HCT116 (cell line): ENCODE measurements at regions of chr19 and their contacts with region 1.

Region 1: GRCh38 chr19:49546825-49547565 is 19.2 kb downstream of the RCN3 start:
- DNase-seq: peak; percentile 85
- ATAC-seq: peak; percentile 89
- H3K4me3 ChIP-seq: peak overlapping the region; percentile 29 to 45
- H3K27ac ChIP-seq: peak overlapping the region; percentile 53; the same call in 1 of the 2 replicates
- H3K4me1 ChIP-seq: peaks cover 3 to 14% of the 10 kb centered on the region in 2 experiments; a peak in 3 of 4 replicates
- H3K27me3 ChIP-seq: no peaks in the 10 kb centered on the region
- CTCF ChIP-seq: peak; percentile 70 to 94 (median 88)
- POLR2A ChIP-seq: no peak
- RAD21 ChIP-seq: peak; percentile 92

Region 2: DNA sequence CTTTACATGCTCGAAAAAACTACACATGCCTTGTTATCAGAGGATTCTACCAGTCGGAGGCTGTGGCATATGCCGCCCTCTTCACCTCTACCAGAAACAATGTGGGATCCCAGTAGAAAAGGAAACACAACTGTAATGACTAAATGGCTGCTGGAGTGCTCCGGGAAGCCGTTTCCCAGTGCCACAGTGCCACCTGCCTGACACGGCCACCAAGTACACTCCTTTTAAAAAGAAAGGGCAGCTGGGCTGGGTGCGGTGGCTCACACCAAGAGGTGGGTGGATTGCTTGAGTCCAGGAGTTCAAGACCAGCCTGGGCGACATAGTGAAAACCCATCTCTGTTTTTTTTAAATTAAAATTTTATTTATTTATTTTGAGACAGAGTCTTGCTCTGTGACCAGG is 322.1 kb before region 1 on chr19:
- CTCF ChIA-PET with region 1: interaction called, 8 read pairs
- POLR2A ChIA-PET with region 1: no interaction called
- RAD21 ChIA-PET with region 1: no interaction called
- intact Hi-C with region 1: loop called (anchors 5 kb)
- DNase-seq: peak; percentile 61
- ATAC-seq: peak; percentile 87
- H3K4me3 ChIP-seq: no peak overlapping the region
- H3K27ac ChIP-seq: no peak overlapping the region
- H3K4me1 ChIP-seq: peaks cover 7 to 20% of the 10 kb centered on the region in 2 experiments; a peak in 3 of 4 replicates
- H3K27me3 ChIP-seq: no peaks in the 10 kb centered on the region
- CTCF ChIP-seq: peak; percentile 61 to 82 (median 67)
- POLR2A ChIP-seq: no peak
- RAD21 ChIP-seq: peak; percentile 93

Region 3: GRCh38 chr19:49473868-49474544 is 73.0 kb before region 1 on chr19 and contains the start of gene FLT3LG:
- CTCF ChIA-PET with region 1: interaction called, 12 read pairs
- POLR2A ChIA-PET with region 1: no interaction called
- RAD21 ChIA-PET with region 1: interaction called in 1 of 2 experiments, 3 read pairs
- intact Hi-C with region 1: no loop called
- DNase-seq: no peak
- ATAC-seq: peak; percentile 41
- H3K4me3 ChIP-seq: peak within 1 kb of the TSS; percentile 54 to 71
- H3K27ac ChIP-seq: 0 out of 2 replicates have a peak within 1 kb of the TSS, but pooled peaks have one; percentile 19
- H3K4me1 ChIP-seq: peaks cover 33 to 57% of the 10 kb centered on the region in 2 experiments
- H3K27me3 ChIP-seq: no peaks in the 10 kb centered on the region
- CTCF ChIP-seq: peak; percentile 95 to 98 (median 95)
- POLR2A ChIP-seq: peak; percentile 23
- RAD21 ChIP-seq: peak; percentile 63
- total RNA-seq, gene FLT3LG: 3.8 TPM

Region 4: GRCh38 chr19:49534632-49535385 is 12.2 kb before region 1 on chr19:
- CTCF ChIA-PET with region 1: interaction called, 11 read pairs
- POLR2A ChIA-PET with region 1: no interaction called
- RAD21 ChIA-PET with region 1: no interaction called
- intact Hi-C with region 1: no loop called
- DNase-seq: no peak
- ATAC-seq: no peak
- H3K4me3 ChIP-seq: no peak overlapping the region
- H3K27ac ChIP-seq: no peak overlapping the region
- H3K4me1 ChIP-seq: peaks cover 0 to 10% of the 10 kb centered on the region in 2 experiments; a peak in 1 of 4 replicates
- H3K27me3 ChIP-seq: no peaks in the 10 kb centered on the region
- CTCF ChIP-seq: no peak
- POLR2A ChIP-seq: no peak
- RAD21 ChIP-seq: no peak

Region 5: DNA sequence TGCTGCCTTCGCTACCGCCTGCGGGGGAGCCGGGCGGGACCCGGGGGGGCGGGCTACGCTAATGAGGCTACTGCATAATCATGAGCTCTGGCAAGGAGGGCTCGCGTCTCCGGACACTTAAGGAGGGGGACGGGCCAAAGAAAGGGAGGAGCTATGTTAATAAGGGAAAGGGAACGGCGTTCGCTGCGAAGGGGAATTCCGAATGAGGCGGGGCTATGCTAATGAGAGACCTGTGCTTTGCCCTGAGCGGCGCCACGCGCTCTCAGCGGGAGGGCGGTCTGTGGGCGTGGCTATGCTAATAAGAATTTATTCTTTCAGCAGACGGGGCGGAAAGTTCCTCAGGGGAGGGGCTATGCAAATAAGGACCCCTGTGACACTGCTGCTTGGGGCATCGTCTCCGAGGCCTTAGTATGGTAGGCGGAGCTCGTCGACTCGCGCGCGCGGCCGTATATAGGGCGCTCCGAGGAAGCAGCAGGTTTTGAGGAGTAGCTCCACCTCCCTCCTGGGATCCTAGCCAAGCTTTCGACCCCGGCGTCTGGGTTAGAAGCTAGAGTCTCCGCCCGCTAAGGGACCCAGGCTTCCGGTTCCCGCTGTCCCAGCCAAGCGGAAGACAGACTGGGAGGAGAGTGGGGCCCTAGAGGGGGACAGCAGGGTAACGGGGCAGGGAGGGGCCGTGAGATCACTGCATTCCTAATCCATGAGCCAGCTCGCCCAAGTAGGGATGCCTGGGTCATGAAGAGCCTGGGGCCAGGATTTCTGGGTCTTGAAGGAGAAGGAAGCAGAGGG is 93.3 kb after region 1 on chr19 and contains the start of gene RRAS:
- CTCF ChIA-PET with region 1: interaction called, 12 read pairs
- POLR2A ChIA-PET with region 1: interaction called, 5 read pairs
- RAD21 ChIA-PET with region 1: no interaction called
- intact Hi-C with region 1: no loop called
- DNase-seq: peak; percentile 99
- ATAC-seq: peak; percentile 76
- H3K4me3 ChIP-seq: peak within 1 kb of the TSS; percentile 75 to 92
- H3K27ac ChIP-seq: peak within 1 kb of the TSS; percentile 98
- H3K4me1 ChIP-seq: peaks cover 15 to 40% of the 10 kb centered on the region in 2 experiments
- H3K27me3 ChIP-seq: no peaks in the 10 kb centered on the region
- CTCF ChIP-seq: no peak
- POLR2A ChIP-seq: peak; percentile 71
- RAD21 ChIP-seq: no peak
- total RNA-seq, gene RRAS: 55.9 TPM

Region 6: DNA sequence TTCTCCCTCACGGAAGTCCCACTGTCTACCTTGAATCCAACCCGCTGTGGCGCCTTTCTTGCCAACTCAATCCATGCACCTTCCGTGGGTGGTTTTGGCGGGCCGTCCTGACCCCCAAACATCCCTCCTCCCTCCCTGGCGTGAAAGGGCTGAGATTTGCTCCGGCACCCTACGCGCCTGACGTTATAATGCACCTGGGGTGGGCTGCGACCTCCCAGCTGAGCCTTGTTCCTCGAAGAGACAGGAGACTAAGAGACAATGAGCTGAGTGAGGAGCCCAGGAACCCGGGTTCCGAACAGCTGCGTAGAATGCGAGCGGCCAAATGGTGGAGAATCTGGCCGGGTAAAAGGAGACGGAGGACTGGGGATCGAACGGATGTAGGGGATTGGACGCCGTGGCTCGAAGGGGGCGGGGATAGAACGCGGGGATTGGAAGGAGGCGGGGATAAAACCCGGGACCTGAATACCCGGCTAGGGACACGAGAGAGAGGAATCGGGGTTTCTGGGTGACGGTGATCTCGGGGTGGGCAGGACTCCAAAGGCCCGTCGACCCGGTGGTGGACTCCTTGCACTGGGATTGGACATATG is 143.8 kb after region 1 on chr19 and contains the start of gene CPT1C:
- CTCF ChIA-PET with region 1: no interaction called
- POLR2A ChIA-PET with region 1: no interaction called
- RAD21 ChIA-PET with region 1: no interaction called
- intact Hi-C with region 1: no loop called
- DNase-seq: no peak
- ATAC-seq: peak; percentile 70
- H3K4me3 ChIP-seq: peak within 1 kb of the TSS; percentile 28 to 58
- H3K27ac ChIP-seq: peak within 1 kb of the TSS; percentile 36; the same call in 1 of the 2 replicates
- H3K4me1 ChIP-seq: peaks cover 0 to 26% of the 10 kb centered on the region in 2 experiments; a peak in 2 of 4 replicates
- H3K27me3 ChIP-seq: no peaks in the 10 kb centered on the region
- CTCF ChIP-seq: no peak
- POLR2A ChIP-seq: no peak
- RAD21 ChIP-seq: no peak
- total RNA-seq, gene CPT1C: 12.0 TPM